GM12878 (cell line): ENCODE measurements at regions of chr5 and their contacts with region 1.

Region 1: DNA sequence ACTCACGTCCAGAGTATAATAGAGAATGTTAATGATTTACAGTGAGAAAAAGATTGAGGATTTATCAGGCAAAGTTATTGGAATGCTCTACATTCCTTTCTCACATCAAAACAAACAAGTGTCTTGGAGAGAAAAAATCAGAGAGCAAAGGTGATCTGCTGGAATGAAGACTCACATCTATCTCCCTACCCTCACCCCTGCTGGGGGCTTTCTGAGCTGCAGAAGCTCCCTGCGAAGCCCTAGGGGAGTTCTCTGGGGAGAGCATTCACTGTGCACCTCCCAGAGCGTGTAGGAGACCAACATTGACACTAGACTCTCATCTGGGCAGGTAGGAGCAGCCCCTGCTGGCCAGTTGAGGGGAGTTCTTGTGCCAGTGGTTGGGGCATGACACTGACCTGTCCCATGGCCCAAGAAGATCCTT is 76.6 kb upstream of the ADAMTS16 start:
- DNase-seq: no peak
- ATAC-seq: peak; percentile 70
- H3K4me3 ChIP-seq: no peak overlapping the region
- H3K27ac ChIP-seq: no peak overlapping the region
- H3K4me1 ChIP-seq: no peaks in the 10 kb centered on the region; the same call in 1 of the 2 replicates
- H3K27me3 ChIP-seq: no peaks in the 10 kb centered on the region
- CTCF ChIP-seq: peak in 2 of 3 experiments; percentile 21 to 34; a peak in 3 of 6 replicates
- EP300 ChIP-seq: no peak
- POLR2A ChIP-seq: no peak
- RAD21 ChIP-seq: peak; percentile 83

Region 2: DNA sequence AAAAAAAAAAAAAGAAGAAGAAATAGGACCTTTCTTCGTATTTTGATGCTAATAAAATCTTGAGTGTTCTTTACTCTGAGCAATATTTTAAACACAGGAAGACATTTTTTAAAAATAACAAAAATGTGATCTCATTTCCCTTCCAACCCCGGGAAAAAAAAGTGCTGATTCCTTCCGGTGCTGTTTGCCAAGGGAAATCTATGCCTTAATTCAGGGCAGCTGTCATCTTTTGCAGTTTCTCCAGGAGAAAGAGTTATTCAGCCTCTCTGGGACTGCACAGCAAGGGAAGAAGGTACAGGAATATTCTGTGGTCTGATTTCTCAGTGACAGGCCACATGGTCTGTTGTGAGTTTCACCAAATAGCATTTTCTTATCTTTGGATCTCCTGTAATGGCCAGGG is 1759.8 kb before region 1 on chr5:
- CTCF ChIA-PET with region 1: no interaction called
- POLR2A ChIA-PET with region 1: no interaction called
- RAD21 ChIA-PET with region 1: no interaction called
- SMC1A ChIA-PET with region 1: no interaction called
- in situ Hi-C with region 1: no loop called
- intact Hi-C with region 1: no loop called
- DNase-seq: no peak
- ATAC-seq: no peak
- H3K4me3 ChIP-seq: no peak overlapping the region
- H3K27ac ChIP-seq: no peak overlapping the region
- H3K4me1 ChIP-seq: no peaks in the 10 kb centered on the region
- H3K27me3 ChIP-seq: no peaks in the 10 kb centered on the region
- CTCF ChIP-seq: no peak
- EP300 ChIP-seq: no peak
- POLR2A ChIP-seq: no peak
- RAD21 ChIP-seq: no peak

Region 3: DNA sequence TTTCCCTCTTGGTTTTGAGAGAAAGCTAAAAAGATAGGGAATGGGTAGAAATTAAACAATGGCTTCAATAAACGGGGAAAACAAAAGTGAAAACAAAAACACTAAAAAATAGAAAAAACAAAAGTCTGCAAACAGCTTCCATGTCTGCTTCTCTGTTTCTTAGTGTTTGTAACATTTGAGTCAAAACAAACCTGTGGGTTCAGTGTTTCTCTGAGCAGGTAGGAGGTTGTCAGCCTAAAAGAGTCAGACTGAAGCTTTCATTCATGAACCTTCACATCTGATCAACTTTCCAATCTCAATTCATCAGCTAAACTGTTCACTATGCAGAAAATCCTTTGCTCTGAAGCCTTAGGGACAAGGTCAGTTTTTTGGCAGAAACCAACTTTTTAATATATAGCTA is 25.9 kb before region 1 on chr5:
- CTCF ChIA-PET with region 1: interaction called, 3 read pairs
- POLR2A ChIA-PET with region 1: no interaction called
- RAD21 ChIA-PET with region 1: interaction called, 12 read pairs
- SMC1A ChIA-PET with region 1: interaction called, 11 read pairs
- in situ Hi-C with region 1: no loop called
- intact Hi-C with region 1: no loop called
- DNase-seq: no peak
- ATAC-seq: no peak
- H3K4me3 ChIP-seq: no peak overlapping the region
- H3K27ac ChIP-seq: peak overlapping the region; percentile 8; the same call in 1 of the 2 replicates
- H3K4me1 ChIP-seq: no peaks in the 10 kb centered on the region
- H3K27me3 ChIP-seq: no peaks in the 10 kb centered on the region
- CTCF ChIP-seq: no peak
- EP300 ChIP-seq: no peak
- POLR2A ChIP-seq: no peak
- RAD21 ChIP-seq: 0 out of 2 replicates have a peak, but pooled peaks have one; percentile 5

Region 4: DNA sequence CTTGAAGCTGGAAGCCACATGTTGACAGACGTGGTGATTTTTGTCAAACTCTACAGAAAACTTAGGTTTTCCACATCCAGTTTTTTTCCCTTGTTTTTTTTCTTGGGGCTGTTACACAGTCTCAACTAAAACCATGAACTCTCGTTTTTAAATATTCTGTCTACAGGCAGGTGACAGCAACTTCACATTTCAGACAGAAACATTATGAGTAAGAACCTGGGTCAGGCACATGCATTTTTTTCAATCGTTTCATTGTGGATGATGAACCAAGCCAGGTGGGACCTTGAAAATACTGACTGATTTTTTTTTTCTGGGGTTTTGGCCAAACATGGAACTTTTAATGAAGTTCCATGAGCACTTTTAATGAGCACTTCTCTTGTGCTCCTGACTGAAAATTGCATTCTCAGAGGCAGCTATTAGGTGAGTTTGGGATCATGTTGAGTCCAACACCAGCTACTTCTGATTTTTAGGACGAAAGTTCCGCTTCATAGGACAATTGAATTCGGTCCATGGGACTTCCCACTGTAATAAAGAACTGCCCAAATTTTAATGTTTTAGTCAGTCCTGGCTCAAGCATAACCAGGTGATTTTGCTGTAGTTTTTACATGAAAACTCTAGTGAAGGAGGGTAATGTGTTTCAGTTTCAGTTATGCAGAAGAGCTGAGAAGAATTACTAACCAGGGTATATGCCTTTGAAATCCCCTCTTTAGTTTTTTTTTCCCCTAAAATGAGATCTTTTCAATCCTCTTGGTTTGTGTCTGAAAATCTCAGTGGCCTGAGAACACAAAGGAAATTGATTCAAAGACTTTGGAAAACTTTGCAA is 16.7 kb before region 1 on chr5:
- CTCF ChIA-PET with region 1: interaction called, 17 read pairs
- POLR2A ChIA-PET with region 1: interaction called, 6 read pairs
- RAD21 ChIA-PET with region 1: interaction called, 37 read pairs
- SMC1A ChIA-PET with region 1: interaction called, 43 read pairs
- in situ Hi-C with region 1: no loop called
- intact Hi-C with region 1: no loop called
- DNase-seq: no peak
- ATAC-seq: peak; percentile 85
- H3K4me3 ChIP-seq: no peak overlapping the region
- H3K27ac ChIP-seq: peak overlapping the region; percentile 62; the same call in 1 of the 2 replicates
- H3K4me1 ChIP-seq: no peaks in the 10 kb centered on the region; the same call in 1 of the 2 replicates
- H3K27me3 ChIP-seq: no peaks in the 10 kb centered on the region
- CTCF ChIP-seq: no peak
- EP300 ChIP-seq: no peak
- POLR2A ChIP-seq: no peak
- RAD21 ChIP-seq: peak; percentile 0; the same call in 1 of the 2 replicates

Region 5: DNA sequence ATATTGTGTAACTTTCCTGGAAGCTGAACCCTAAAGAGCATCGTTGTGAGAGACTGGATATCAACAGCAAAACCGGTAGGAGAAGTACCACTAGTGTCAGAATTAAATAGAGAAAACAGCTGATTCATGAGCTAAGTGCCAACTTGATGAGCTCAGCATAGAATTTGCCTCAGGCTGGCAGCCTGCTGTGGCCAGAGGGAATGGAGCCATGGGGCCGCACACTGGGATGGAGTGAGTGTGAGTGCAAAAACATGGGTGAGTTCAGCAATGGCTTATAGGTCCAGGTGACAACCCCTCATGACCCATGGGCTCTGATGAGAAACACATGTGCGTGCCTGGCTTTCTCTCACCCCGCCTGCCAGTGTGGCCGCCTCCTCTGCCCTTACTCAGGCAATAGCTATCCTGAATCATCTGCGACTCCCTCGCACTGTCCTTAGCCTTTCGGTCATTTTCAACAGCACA is 102.0 kb after region 1 on chr5:
- CTCF ChIA-PET with region 1: no interaction called
- POLR2A ChIA-PET with region 1: no interaction called
- RAD21 ChIA-PET with region 1: no interaction called
- SMC1A ChIA-PET with region 1: no interaction called
- in situ Hi-C with region 1: no loop called
- intact Hi-C with region 1: no loop called
- DNase-seq: no peak
- ATAC-seq: no peak
- H3K4me3 ChIP-seq: no peak overlapping the region
- H3K27ac ChIP-seq: no peak overlapping the region
- H3K4me1 ChIP-seq: no peaks in the 10 kb centered on the region
- H3K27me3 ChIP-seq: no peaks in the 10 kb centered on the region
- CTCF ChIP-seq: no peak
- EP300 ChIP-seq: no peak
- POLR2A ChIP-seq: no peak
- RAD21 ChIP-seq: no peak